ENCODE measurements at regions of chr4 and their contacts with region 1.

Region 1: DNA sequence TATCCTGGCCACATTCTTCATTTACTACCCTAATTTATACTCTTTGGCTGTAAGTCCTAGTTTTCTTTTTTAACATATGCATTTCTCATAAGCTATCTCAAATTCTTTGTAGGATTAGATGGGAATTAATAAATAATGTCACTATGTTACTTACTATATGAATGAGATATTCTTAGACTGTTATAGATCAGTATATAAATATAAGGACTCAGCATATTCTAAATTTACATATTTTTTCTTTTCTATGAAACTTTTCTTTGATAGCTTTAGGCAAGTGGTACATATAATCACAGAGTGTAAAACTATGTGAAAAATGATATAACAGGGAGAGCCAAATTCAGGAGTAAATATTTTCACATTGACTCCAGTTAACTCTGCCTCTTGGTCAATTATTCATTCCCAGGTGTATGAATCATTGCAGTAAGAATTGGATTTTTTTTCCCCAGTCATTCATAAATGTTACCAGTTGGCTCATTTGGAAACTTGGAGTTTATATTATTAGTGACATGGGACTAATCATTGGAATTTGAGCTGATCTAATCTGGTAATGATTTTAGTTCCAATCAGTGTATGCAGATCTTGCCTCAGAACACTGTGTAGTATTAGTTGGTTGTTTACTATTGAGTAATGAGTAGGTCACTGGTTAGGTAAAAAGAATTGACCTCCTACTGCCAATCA is 25.3 kb downstream of the FHIP1A start:
- DNase-seq: no peak

Region 2: DNA sequence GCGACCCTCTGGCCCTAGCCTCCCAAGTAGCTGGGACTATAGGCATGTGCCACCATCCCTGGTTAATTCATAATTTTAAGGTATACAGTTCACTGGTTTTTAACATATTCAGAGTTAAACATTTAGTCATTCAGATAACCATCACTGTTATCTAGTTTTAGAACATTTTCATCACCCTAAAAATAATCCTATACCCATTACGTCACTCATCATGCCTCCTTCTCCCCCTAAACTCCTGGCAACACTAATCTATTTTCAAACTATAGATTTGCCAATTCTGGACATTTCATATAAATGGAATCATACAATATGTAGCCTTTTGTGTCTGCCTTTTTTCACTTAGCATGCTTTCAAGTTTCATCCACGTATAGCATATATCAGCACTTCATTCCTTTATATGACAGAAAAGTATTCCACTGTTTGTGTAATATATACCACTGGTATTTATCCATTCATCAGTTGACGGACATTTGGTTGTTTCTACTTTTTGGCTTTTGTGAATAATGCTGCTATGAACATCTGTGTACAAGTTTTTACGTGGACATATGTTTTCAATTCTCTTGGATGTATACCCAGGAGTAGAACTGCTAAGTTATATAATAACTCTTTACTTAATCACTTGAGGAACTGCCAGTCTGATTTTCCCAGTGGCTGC is 366.9 kb before region 1 on chr4:
- intact Hi-C with region 1: no loop called
- DNase-seq: no peak

Region 3: GRCh38 chr4:151418385-151418784 is 15.9 kb before region 1 on chr4:
- intact Hi-C with region 1: loop called in 1 of 2 experiments (anchors 1 kb)
- DNase-seq: no peak

Region 4: GRCh38 chr4:151462554-151462953 is 28.2 kb after region 1 on chr4:
- intact Hi-C with region 1: loop called in 1 of 2 experiments (anchors 1 kb)
- DNase-seq: no peak

Region 5: DNA sequence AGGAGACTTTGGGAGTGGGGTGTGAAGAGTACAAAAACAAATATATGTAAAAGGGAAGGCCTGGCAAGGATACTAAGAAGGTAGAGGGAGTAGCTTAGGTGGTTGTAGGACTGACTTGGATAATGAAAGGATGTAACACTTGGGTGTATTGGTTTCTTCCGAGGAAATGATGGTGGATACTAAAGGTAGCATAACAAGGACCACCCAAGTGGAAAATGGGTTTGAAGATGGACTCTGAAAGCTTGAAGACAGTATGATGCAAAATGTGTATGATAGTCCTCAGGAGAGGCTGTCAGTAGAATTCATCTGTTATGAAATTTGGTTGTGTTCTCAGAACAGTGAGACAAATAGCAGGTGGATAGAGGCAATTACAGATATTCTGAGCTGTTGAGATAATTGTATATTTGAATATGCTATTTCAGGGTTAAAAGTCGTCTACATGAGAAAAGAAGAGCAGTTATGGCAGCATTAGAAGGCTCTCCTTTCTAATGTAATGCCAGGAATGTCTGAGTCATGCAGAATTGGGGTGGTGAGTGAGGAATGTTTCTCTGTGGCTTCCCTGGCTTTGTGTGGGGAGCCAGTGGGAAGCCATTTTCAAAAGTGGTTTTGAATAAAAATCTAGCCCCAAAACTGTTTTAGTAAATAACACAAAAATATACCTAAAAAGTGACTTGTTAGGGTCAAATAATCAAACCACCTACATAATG is 50.2 kb after region 1 on chr4:
- intact Hi-C with region 1: no loop called
- DNase-seq: no peak

Region 6: GRCh38 chr4:153189016-153189801 is 1754.9 kb after region 1 on chr4:
- intact Hi-C with region 1: no loop called
- DNase-seq: no peak